Naive thymus-derived CD4-positive, alpha-beta T cell (primary cell): ENCODE measurements at regions of chr16 and their contacts with region 1.

Region 1: GRCh38 chr16:67660564-67661028 is at the start of gene PARD6A:
- DNase-seq: peak; percentile 81 to 95 (median 93)
- ATAC-seq: peak; percentile 89
- H3K4me3 ChIP-seq: peak within 1 kb of the TSS; percentile 99
- H3K4me3 Mint-ChIP-seq: peak within 1 kb of the TSS; percentile 90 to 97 (median 94)
- H3K27ac ChIP-seq: peak within 1 kb of the TSS; percentile 97
- H3K27ac Mint-ChIP-seq: peak within 1 kb of the TSS; percentile 84 to 98 (median 97)
- H3K4me1 ChIP-seq: peaks cover 11 to 17% of the 10 kb centered on the region in 2 donors
- H3K4me1 Mint-ChIP-seq: peaks cover 15 to 40% (median 22%) of the 10 kb centered on the region in 7 donors
- H3K27me3 ChIP-seq: no peaks in the 10 kb centered on the region
- H3K27me3 Mint-ChIP-seq: no peaks in the 10 kb centered on the region
- total RNA-seq, gene PARD6A: 4.5 to 11.2 (median 4.7) TPM

Region 2: DNA sequence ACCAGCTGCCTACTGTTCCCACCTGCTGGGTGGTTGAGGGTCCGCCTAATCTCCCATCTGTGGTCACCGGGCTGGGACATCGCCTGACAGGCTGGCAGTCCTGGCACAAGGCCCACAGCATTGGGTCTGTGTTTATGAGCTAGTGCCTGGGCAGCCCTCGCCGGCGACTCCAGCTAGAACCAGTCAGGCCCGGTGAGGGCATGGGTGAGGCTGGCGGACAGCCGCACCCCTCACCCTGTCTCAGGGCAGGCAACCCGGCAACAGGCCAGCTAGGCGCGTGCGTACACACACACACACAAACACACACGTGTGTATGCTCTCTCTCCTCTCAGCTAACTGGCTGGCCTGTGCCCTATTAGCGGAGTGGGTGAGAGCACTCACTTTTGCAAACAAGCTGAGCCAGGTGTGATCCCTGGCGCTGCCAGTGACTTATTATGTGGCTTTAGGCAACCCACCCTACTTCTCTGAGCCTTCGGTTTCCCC is 219.3 kb before region 1 on chr16:
- CTCF ChIA-PET with region 1: no interaction called
- POLR2A ChIA-PET with region 1: no interaction called
- intact Hi-C with region 1: no loop called
- DNase-seq: no peak
- ATAC-seq: no peak
- H3K4me3 ChIP-seq: no peak overlapping the region
- H3K4me3 Mint-ChIP-seq: no peak overlapping the region
- H3K27ac ChIP-seq: no peak overlapping the region
- H3K27ac Mint-ChIP-seq: no peak overlapping the region
- H3K4me1 ChIP-seq: no peaks in the 10 kb centered on the region
- H3K4me1 Mint-ChIP-seq: peaks cover 0 to 3% (median 0%) of the 10 kb centered on the region in 7 donors
- H3K27me3 ChIP-seq: no peaks in the 10 kb centered on the region
- H3K27me3 Mint-ChIP-seq: no peaks in the 10 kb centered on the region

Region 3: GRCh38 chr16:67537270-67537635 is 123.3 kb before region 1 on chr16:
- CTCF ChIA-PET with region 1: no interaction called
- POLR2A ChIA-PET with region 1: interaction called, 7 read pairs
- intact Hi-C with region 1: loop called (anchors 1 kb)
- DNase-seq: peak in 2 of 9 donors; percentile 58 to 69
- ATAC-seq: peak; percentile 63
- H3K4me3 ChIP-seq: peak overlapping the region; percentile 68
- H3K4me3 Mint-ChIP-seq: peak overlapping the region; percentile 68 to 91 (median 85)
- H3K27ac ChIP-seq: peak overlapping the region; percentile 82
- H3K27ac Mint-ChIP-seq: peak overlapping the region; percentile 54 to 91 (median 82)
- H3K4me1 ChIP-seq: peaks cover 6% of the 10 kb centered on the region in 2 donors
- H3K4me1 Mint-ChIP-seq: peaks cover 29 to 51% (median 42%) of the 10 kb centered on the region in 7 donors
- H3K27me3 ChIP-seq: no peaks in the 10 kb centered on the region
- H3K27me3 Mint-ChIP-seq: peaks cover 0 to 42% (median 0%) of the 10 kb centered on the region in 5 donors

Region 4: GRCh38 chr16:67546761-67547422 is 113.7 kb before region 1 on chr16:
- CTCF ChIA-PET with region 1: interaction called, 19 read pairs
- POLR2A ChIA-PET with region 1: interaction called, 7 read pairs
- intact Hi-C with region 1: loop called in 1 of 2 experiments (anchors 1 kb)
- DNase-seq: peak; percentile 57 to 78 (median 70)
- ATAC-seq: peak; percentile 55
- H3K4me3 ChIP-seq: peak overlapping the region; percentile 56
- H3K4me3 Mint-ChIP-seq: peak overlapping the region; percentile 75 to 92 (median 86)
- H3K27ac ChIP-seq: peak overlapping the region; percentile 70
- H3K27ac Mint-ChIP-seq: peak overlapping the region; percentile 59 to 99 (median 97)
- H3K4me1 ChIP-seq: peaks cover 19 to 40% of the 10 kb centered on the region in 2 donors
- H3K4me1 Mint-ChIP-seq: peaks cover 25 to 56% (median 51%) of the 10 kb centered on the region in 7 donors
- H3K27me3 ChIP-seq: no peaks in the 10 kb centered on the region
- H3K27me3 Mint-ChIP-seq: no peaks in the 10 kb centered on the region

Region 5: GRCh38 chr16:67719048-67719777 is 58.6 kb after region 1 on chr16 and contains the start of gene GFOD2:
- CTCF ChIA-PET with region 1: no interaction called
- POLR2A ChIA-PET with region 1: interaction called, 5 read pairs
- intact Hi-C with region 1: loop called in 1 of 2 experiments (anchors 1 kb)
- DNase-seq: peak; percentile 94 to 100 (median 96)
- ATAC-seq: peak; percentile 96
- H3K4me3 ChIP-seq: peak within 1 kb of the TSS; percentile 95
- H3K4me3 Mint-ChIP-seq: peak within 1 kb of the TSS; percentile 90 to 99 (median 94)
- H3K27ac ChIP-seq: peak within 1 kb of the TSS; percentile 88
- H3K27ac Mint-ChIP-seq: peak within 1 kb of the TSS; percentile 91 to 99 (median 98)
- H3K4me1 ChIP-seq: peaks cover 15 to 16% of the 10 kb centered on the region in 2 donors
- H3K4me1 Mint-ChIP-seq: peaks cover 19 to 51% (median 39%) of the 10 kb centered on the region in 7 donors
- H3K27me3 ChIP-seq: no peaks in the 10 kb centered on the region
- H3K27me3 Mint-ChIP-seq: no peaks in the 10 kb centered on the region
- total RNA-seq, gene GFOD2: 6.3 to 13.4 (median 11.4) TPM